ENCODE measurements at regions of chrX and their contacts with region 1.

Region 1: DNA sequence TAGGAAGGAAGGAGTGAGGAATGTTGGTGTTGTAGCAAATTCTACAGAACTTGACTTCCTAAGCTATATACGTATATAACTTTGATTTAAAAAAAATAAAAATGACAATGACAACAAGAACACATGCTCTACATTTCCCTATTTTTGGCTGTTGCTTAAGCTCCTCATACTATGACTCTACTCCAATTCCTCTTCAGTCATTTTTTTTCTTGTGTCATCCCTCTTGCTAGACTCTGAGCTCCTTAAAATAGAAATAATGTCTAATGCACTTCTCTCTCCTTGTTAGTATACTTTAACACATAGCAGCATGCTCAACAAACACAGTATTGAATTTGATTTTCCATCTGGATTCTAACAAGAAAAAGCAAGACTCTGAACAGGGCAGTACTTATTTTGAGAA is 144.0 kb downstream of the HDX start:
- DNase-seq: no peak
- ATAC-seq: no peak
- H3K4me3 ChIP-seq: no peak overlapping the region
- H3K27ac ChIP-seq: no peak overlapping the region
- H3K4me1 ChIP-seq: no peaks in the 10 kb centered on the region
- H3K27me3 ChIP-seq: no peaks in the 10 kb centered on the region
- CTCF ChIP-seq: no peak

Region 2: DNA sequence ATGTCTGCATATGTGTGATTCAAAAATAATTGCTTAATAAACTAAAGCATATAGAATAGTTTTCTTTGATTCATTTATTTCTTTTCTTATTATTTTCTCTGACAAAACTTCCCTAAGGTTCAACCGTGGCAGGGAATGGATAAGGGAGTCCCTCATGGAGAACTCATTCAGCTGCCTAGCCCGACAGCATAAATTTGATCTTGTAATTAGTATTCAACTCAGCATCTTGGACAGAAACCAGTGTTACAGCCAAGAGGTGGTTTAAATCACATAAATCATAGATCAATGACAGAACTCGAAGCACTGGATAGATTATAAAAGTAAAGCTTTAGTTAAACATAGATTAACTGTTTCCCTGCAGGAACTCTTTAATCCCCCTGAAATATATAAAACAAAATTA is 1024.5 kb before region 1 on chrX:
- CTCF ChIA-PET with region 1: no interaction called
- POLR2A ChIA-PET with region 1: no interaction called
- intact Hi-C with region 1: no loop called
- DNase-seq: no peak
- ATAC-seq: no peak
- H3K4me3 ChIP-seq: no peak overlapping the region
- H3K27ac ChIP-seq: no peak overlapping the region
- H3K4me1 ChIP-seq: no peaks in the 10 kb centered on the region
- H3K27me3 ChIP-seq: no peaks in the 10 kb centered on the region
- CTCF ChIP-seq: no peak

Region 3: DNA sequence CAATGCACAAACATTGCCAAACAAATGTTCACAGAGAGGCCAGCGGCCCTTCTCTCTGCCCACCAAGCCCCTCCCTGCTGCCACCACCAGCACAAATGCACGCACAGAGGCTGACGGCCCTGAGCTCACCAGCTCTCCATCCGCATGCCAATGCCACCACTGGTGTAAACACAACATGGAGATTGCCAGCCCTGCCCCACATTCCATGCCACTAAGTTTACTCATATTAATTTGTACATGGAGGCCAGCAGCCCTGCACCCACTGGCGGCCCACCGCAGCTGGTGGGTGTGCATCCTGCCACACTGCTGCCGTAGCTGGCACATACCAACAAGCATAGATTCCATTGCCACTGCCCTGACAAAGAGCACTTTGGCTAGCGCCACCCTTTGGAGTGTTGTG is 373.3 kb before region 1 on chrX:
- CTCF ChIA-PET with region 1: no interaction called
- POLR2A ChIA-PET with region 1: no interaction called
- intact Hi-C with region 1: no loop called
- DNase-seq: no peak
- ATAC-seq: no peak
- H3K4me3 ChIP-seq: no peak overlapping the region
- H3K27ac ChIP-seq: no peak overlapping the region
- H3K4me1 ChIP-seq: no peaks in the 10 kb centered on the region
- H3K27me3 ChIP-seq: no peaks in the 10 kb centered on the region
- CTCF ChIP-seq: no peak

Region 4: DNA sequence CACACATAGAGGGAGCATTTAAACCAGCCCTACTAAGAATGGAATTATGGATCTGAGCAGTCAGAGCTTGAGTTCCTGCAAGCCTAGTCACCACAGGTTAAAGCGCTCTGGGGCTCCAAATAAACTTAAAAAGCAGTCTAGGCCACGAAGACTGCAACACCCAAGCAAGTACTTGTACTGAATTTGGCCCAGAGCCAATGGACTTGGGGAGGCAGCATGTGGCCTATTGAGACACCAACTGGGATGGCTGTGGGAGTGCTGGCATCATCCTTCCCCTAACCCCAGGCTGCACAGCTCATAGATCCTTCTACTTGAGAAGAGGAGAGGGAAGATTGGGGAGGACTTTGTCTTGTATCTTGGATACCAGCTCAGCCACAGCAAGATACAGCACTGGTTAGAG is 58.8 kb before region 1 on chrX:
- CTCF ChIA-PET with region 1: no interaction called
- POLR2A ChIA-PET with region 1: no interaction called
- intact Hi-C with region 1: loop called (anchors 10 kb)
- DNase-seq: no peak
- ATAC-seq: no peak
- H3K4me3 ChIP-seq: no peak overlapping the region
- H3K27ac ChIP-seq: no peak overlapping the region
- H3K4me1 ChIP-seq: no peaks in the 10 kb centered on the region
- H3K27me3 ChIP-seq: no peaks in the 10 kb centered on the region
- CTCF ChIP-seq: no peak

Region 5: DNA sequence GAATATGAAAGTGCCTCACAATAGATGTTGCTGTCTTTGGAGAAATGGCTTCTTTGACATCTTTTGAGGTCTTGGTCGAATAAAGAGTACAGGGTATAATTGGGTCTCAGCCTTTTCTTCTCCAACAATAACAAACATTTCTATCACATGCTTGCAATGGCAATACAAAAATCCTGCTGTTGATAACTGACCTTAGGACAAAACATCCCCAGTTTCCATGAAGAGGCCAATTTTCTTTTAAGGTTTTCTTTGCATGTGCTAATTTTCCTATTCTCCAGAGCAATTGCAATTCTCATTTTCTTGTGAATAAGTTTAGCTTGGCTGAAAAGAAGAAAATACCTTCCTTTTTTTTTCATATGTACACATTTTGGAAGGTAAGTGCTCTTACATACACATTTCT is 39.6 kb before region 1 on chrX:
- CTCF ChIA-PET with region 1: no interaction called
- POLR2A ChIA-PET with region 1: no interaction called
- intact Hi-C with region 1: no loop called
- DNase-seq: no peak
- ATAC-seq: no peak
- H3K4me3 ChIP-seq: no peak overlapping the region
- H3K27ac ChIP-seq: no peak overlapping the region
- H3K4me1 ChIP-seq: no peaks in the 10 kb centered on the region
- H3K27me3 ChIP-seq: no peaks in the 10 kb centered on the region
- CTCF ChIP-seq: no peak

Measured in PC-3 (cell line).